ENCODE measurements at regions of chr17 and their contacts with region 1.

Region 1: GRCh38 chr17:4709794-4710692 is at the start of gene ARRB2:
- DNase-seq: peak; percentile 97
- ATAC-seq: peak; percentile 80
- H3K4me3 ChIP-seq: peak within 1 kb of the TSS; percentile 72 to 86 (median 85)
- H3K27ac ChIP-seq: peak within 1 kb of the TSS; percentile 65
- H3K4me1 ChIP-seq: peaks cover 43% of the 10 kb centered on the region
- H3K27me3 ChIP-seq: no peaks in the 10 kb centered on the region
- CTCF ChIP-seq: peak; percentile 85
- EP300 ChIP-seq: 0 out of 4 replicates have a peak, but pooled peaks of 1 of the 2 experiments have one; percentile 13
- POLR2A ChIP-seq: peak in 1 of 2 experiments; percentile 58; a peak in 3 of 4 replicates
- RAD21 ChIP-seq: peak; percentile 92
- total RNA-seq, gene ARRB2: 15.5 and 21.5 TPM in 2 replicates

Region 2: DNA sequence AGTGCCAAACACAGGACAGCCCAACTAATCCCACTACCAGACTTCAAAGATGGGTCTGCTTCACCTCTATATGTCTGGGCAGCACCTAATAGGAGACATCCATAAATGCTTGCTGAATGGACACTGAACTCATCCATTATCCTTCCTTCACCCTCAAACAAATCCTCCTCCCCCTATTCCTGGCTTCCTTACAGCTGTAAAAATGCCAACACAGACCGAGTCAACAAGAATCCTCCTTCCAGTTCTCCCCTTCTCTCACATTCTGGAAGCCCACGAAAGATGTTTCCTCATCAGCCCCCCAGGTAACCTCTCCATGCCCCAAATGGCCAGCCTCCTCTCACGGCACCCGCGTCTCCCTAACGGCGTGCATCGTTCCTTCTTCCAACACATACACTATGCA is 18.4 kb before region 1 on chr17:
- CTCF ChIA-PET with region 1: no interaction called
- POLR2A ChIA-PET with region 1: no interaction called
- in situ Hi-C with region 1: no loop called
- intact Hi-C with region 1: no loop called
- DNase-seq: no peak
- ATAC-seq: no peak
- H3K4me3 ChIP-seq: no peak overlapping the region
- H3K27ac ChIP-seq: no peak overlapping the region
- H3K4me1 ChIP-seq: no peaks in the 10 kb centered on the region
- H3K27me3 ChIP-seq: no peaks in the 10 kb centered on the region
- CTCF ChIP-seq: no peak
- EP300 ChIP-seq: no peak
- POLR2A ChIP-seq: no peak
- RAD21 ChIP-seq: no peak

Region 3: GRCh38 chr17:4721203-4722135 is 11.4 kb after region 1 on chr17:
- CTCF ChIA-PET with region 1: no interaction called
- POLR2A ChIA-PET with region 1: interaction called, 87 read pairs
- in situ Hi-C with region 1: no loop called
- intact Hi-C with region 1: loop called (anchors 1 kb)
- DNase-seq: peak; percentile 95
- ATAC-seq: peak; percentile 90
- H3K4me3 ChIP-seq: peak overlapping the region in 1 of 3 experiments; percentile 58; a peak in 3 of 6 replicates
- H3K27ac ChIP-seq: peak overlapping the region; percentile 68
- H3K4me1 ChIP-seq: peaks cover 35% of the 10 kb centered on the region
- H3K27me3 ChIP-seq: no peaks in the 10 kb centered on the region
- CTCF ChIP-seq: no peak
- EP300 ChIP-seq: peak in 1 of 2 experiments; percentile 85; a peak in 2 of 4 replicates
- POLR2A ChIP-seq: peak; percentile 50 to 69; a peak in 3 of 4 replicates
- RAD21 ChIP-seq: 0 out of 2 replicates have a peak, but pooled peaks have one; percentile 12

Region 4: GRCh38 chr17:4771519-4772234 is 61.6 kb after region 1 on chr17 and contains the start of gene TM4SF5:
- CTCF ChIA-PET with region 1: no interaction called
- POLR2A ChIA-PET with region 1: interaction called, 64 read pairs
- in situ Hi-C with region 1: no loop called
- intact Hi-C with region 1: no loop called
- DNase-seq: peak; percentile 95
- ATAC-seq: peak; percentile 96
- H3K4me3 ChIP-seq: peak within 1 kb of the TSS; percentile 65 to 83 (median 75)
- H3K27ac ChIP-seq: peak within 1 kb of the TSS; percentile 76
- H3K4me1 ChIP-seq: peaks cover 78% of the 10 kb centered on the region
- H3K27me3 ChIP-seq: no peaks in the 10 kb centered on the region; a peak in 1 of 5 replicates
- CTCF ChIP-seq: peak; percentile 41
- EP300 ChIP-seq: peak in 1 of 2 experiments; percentile 84; a peak in 2 of 4 replicates
- POLR2A ChIP-seq: peak; percentile 53 to 96
- RAD21 ChIP-seq: no peak
- total RNA-seq, gene TM4SF5: 15.6 and 30.1 TPM in 2 replicates

Region 5: DNA sequence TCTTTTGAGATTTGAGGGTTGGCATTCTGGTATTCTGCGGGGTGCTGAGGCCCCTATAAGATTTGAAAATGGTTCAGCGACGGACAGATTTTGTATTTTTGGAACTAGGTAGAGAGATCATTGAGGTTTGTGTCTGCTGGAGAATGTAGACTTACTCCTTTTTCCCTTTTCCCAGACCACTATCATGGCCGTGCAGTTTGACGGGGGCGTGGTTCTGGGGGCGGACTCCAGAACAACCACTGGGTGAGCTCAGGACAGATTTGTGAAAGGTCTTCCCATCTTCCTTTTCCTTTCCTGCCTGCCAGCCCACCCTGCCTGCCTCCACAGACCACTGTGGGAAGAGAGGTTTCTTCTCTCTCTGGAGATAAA is 86.5 kb after region 1 on chr17:
- CTCF ChIA-PET with region 1: no interaction called
- POLR2A ChIA-PET with region 1: interaction called, 22 read pairs
- in situ Hi-C with region 1: no loop called
- intact Hi-C with region 1: no loop called
- DNase-seq: peak; percentile 33
- ATAC-seq: peak; percentile 86
- H3K4me3 ChIP-seq: peak overlapping the region; percentile 85 to 97 (median 86)
- H3K27ac ChIP-seq: peak overlapping the region; percentile 79
- H3K4me1 ChIP-seq: peaks cover 17% of the 10 kb centered on the region
- H3K27me3 ChIP-seq: no peaks in the 10 kb centered on the region; a peak in 1 of 5 replicates
- CTCF ChIP-seq: no peak
- EP300 ChIP-seq: no peak
- POLR2A ChIP-seq: 0 out of 4 replicates have a peak, but pooled peaks of 1 of the 2 experiments have one; percentile 5
- RAD21 ChIP-seq: no peak

Region 6: GRCh38 chr17:4881761-4882555 is 171.9 kb after region 1 on chr17:
- CTCF ChIA-PET with region 1: interaction called, 8 read pairs
- POLR2A ChIA-PET with region 1: no interaction called
- in situ Hi-C with region 1: no loop called
- intact Hi-C with region 1: loop called (anchors 2 kb)
- DNase-seq: peak; percentile 41
- ATAC-seq: peak; percentile 90
- H3K4me3 ChIP-seq: no peak overlapping the region
- H3K27ac ChIP-seq: no peak overlapping the region
- H3K4me1 ChIP-seq: no peaks in the 10 kb centered on the region
- H3K27me3 ChIP-seq: no peaks in the 10 kb centered on the region
- CTCF ChIP-seq: peak; percentile 88
- EP300 ChIP-seq: no peak
- POLR2A ChIP-seq: no peak
- RAD21 ChIP-seq: peak; percentile 84

Measured in HepG2 (cell line).